ENCODE measurements at regions of chr1 and their contacts with region 1.

Region 1: GRCh38 chr1:16960560-16961296 is 19.7 kb downstream of the MFAP2 start:
- DNase-seq: peak; percentile 51 to 96 (median 78)

Region 2: DNA sequence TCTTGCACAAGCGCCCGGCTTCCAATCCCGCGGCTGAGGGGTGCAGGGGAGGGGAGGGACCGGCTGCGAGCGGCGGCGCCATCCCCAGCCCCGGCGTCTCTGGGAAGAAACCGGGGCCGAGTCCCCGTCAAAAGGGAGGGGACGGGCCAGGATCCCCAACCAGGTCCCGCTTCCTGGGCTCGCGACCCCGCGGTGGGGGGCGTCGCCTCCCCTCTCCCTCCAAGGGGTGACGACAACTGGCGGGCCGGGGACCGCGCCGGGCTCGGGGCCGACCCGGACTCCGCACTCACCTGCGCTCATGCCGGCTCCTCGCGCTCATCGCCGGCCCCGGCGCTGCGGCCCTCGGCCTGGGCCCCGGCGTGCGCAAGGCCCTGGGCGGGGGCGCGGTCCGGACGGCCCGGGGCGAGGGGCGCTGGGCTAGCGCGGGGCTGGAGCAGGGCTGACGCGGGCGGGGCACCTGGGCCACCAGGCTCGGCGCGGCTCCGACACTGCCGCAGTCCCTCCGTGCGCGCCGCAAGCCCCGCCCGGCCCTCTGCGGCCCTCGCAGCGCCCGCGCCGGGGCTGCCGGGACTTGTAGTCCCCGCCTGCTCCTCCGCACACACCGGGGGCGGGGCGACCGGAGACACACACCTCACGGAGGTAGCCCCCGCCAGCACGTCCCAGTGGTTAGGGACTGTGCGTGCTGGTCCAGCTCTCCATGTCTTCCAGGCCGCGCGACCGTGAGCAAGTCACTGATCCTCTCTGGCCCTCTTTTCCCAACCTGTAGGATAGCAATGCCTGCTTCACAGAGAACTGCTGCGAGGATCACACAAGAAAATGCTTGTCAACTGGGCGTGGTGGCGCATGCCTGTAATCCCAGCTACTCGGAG is 50.9 kb after region 1 on chr1 and contains the start of gene ATP13A2:
- intact Hi-C with region 1: loop called (anchors 10 kb)
- DNase-seq: peak; percentile 62 to 98 (median 86)

Region 3: GRCh38 chr1:17045634-17046333 is 85.1 kb after region 1 on chr1:
- intact Hi-C with region 1: no loop called
- DNase-seq: no peak

Region 4: DNA sequence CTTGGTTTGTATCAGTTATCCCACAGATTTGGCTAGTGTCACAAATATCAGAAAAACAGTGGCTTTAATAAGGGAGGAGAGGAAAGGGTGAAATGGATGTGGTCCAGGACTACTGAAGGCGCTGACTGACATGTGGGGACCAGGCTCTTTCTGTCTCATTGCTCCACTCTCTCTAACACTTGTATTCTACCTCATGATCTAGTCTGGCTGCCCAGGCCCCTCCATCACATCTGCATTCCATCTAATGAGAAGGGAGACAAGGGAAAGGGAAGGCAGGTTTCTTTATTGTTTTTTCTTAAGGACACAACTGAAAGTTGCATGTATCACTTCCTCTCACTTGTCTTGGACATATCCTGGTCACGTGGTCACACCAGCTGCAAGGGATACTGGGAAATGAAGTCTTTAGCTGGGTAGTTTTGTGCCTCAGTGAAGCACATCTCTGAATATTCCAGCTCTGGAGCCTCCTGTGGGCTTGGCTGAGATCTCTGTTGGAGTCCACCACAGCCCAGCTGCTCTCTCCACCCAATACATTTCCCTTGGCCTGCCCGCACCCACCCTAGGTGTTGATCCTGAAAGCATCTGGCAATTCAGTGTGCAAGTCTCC is 200.5 kb after region 1 on chr1:
- intact Hi-C with region 1: no loop called
- DNase-seq: no peak